Cardiac septum (tissue), 1 donor: ENCODE measurements at regions of chr16 and their contacts with region 1.

Region 1: GRCh38 chr16:1782352-1783091 is at the starts of genes NUBP2 and SPSB3:
- DNase-seq: peak; percentile 100
- total RNA-seq, gene NUBP2: 32.3 TPM
- total RNA-seq, gene SPSB3: 24.2 TPM

Region 2: DNA sequence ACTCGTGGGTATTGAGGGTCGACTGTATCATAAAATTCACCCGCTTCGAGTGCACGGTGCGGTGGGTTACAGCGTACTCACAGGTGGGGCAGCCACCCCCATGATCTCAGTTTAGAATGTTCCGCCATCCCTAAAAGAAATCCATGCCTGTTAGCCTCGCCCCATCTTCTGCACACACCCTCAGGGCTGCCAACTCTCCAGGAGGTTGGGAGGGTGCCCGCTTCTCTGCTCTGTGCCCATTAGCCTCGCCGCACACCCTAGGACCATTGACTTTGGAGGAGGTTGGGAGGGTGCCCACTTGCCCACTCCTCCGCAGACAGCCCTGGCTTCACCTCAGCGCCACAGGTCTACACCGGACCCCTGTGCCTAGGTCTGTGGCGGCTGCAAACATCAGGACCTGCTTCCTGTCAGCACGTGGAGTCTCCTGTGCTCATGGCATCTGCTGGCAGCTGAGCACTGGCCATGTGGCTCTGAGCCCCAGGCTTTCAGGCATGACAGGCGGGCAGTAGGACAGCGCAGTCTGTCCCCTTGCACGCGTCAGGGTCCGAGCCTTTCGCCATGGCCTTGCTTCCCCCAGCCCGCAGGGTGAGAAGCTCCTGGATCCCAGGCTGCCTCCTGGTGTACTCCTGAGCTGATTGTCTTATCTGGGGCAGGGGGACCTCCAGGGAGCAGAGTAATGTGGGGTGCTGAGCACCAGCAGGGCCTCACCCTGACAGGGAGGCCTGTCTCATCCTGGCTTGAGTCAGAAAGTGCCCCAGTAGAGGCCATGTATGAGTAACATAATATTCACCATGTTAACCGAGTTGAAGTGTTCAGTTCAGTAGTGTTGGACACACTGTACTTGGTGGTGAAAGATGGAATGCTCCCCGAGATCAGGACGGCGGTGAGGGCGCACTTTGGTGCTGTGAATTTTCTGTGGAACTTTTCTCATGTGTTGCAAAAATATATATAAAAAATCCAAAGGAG is 33.1 kb before region 1 on chr16:
- intact Hi-C with region 1: no loop called
- DNase-seq: no peak

Region 3: DNA sequence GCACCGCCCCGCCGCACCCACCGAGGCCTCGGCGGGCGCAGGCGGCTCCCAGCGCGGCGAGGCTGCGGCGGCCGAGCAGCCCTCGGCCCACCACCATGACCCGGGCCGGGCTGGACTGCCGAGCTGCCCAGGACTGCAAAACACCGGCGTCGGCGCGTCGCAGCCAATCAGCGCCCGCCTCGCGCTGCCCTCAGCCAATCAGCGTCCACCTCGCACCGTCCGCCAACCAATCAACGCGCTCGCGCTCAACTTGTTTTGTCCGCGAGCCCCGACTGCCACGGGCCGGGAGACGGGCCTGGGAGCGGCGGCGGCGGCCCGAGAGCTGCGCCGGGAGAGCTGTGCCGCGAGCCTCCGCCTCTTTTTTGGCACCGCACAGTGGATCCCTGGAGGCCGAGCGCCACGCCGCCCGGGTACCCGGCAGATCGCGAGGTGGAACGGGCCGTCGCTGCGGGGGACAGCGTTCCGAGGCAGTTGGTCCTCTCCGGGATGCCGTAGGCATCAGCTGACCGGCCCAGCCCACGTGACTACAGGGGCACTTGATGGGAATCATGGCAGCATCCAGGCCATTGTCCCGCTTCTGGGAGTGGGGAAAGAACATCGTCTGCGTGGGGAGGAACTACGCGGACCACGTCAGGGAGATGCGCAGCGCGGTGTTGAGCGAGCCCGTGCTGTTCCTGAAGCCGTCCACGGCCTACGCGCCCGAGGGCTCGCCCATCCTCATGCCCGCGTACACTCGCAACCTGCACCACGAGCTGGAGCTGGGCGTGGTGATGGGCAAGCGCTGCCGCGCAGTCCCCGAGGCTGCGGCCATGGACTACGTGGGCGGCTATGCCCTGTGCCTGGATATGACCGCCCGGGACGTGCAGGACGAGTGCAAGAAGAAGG is 44.4 kb after region 1 on chr16 and contains the starts of genes FAHD1 and HAGH:
- intact Hi-C with region 1: loop called (anchors 5 kb)
- DNase-seq: peak; percentile 97
- total RNA-seq, gene FAHD1: 20.5 TPM
- total RNA-seq, gene HAGH: 166 TPM

Region 4: GRCh38 chr16:1942810-1943726 is 160.5 kb after region 1 on chr16 and contains the start of gene MSRB1:
- intact Hi-C with region 1: loop called (anchors 5 kb)
- DNase-seq: peak; percentile 100
- total RNA-seq, gene MSRB1: 39.2 TPM